Dendritic cell treated with granulocyte-macrophage colony-stimulating factor and Interleukin-4, amounts not matched to agents 40 ng/mL and 50 ng/mL, for 4 days (primary cell): ENCODE measurements at regions of chr6 and their contacts with region 1.

Region 1: DNA sequence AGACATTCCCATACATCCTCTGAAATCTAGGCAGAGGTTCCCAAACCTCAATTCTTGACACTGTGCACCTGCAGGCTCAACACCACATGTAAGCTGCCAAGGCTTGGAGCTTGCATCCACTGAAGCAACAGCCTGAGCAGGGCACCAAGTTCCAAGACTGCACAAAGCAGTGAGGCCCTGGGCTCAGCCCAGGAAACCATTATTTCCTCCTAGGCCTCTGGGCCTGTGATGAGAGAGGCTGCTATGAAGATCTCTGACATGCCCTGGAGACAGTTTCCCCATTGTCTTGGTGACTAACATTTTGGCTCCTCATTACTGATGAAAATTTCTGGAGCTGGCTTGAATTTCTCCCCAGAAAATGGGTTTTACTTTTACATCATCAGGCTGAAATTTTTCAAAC is 107.5 kb upstream of the SAMD5 start:
- H3K4me3 Mint-ChIP-seq: no peak overlapping the region
- H3K27ac Mint-ChIP-seq: no peak overlapping the region
- H3K4me1 Mint-ChIP-seq: no peaks in the 10 kb centered on the region
- H3K27me3 Mint-ChIP-seq: no peaks in the 10 kb centered on the region

Region 2: DNA sequence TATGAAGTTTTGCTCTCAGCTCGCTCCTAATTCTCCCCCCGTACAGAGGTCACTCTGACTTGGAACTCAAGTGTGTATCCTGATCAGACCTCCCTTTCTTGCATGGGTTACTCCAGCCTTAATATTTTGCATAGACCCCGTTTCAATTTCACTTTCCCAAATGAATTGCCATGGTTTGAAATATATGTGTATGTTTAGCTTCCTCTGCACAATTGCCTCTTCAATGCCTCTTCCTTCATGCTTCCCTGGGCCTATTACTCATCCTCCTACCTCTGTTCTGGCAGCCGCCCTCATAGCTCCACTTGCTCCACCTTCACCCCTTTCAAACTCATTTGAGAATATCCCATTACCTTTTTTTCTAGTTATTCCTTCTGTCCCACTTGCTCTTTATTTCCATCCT is 17.6 kb after region 1 on chr6:
- intact Hi-C with region 1: loop called (anchors 1 kb)
- H3K4me3 Mint-ChIP-seq: no peak overlapping the region
- H3K27ac Mint-ChIP-seq: no peak overlapping the region
- H3K4me1 Mint-ChIP-seq: no peaks in the 10 kb centered on the region
- H3K27me3 Mint-ChIP-seq: no peaks in the 10 kb centered on the region